GM12878 (cell line): ENCODE measurements at regions of chr6 and their contacts with region 1.

Region 1: DNA sequence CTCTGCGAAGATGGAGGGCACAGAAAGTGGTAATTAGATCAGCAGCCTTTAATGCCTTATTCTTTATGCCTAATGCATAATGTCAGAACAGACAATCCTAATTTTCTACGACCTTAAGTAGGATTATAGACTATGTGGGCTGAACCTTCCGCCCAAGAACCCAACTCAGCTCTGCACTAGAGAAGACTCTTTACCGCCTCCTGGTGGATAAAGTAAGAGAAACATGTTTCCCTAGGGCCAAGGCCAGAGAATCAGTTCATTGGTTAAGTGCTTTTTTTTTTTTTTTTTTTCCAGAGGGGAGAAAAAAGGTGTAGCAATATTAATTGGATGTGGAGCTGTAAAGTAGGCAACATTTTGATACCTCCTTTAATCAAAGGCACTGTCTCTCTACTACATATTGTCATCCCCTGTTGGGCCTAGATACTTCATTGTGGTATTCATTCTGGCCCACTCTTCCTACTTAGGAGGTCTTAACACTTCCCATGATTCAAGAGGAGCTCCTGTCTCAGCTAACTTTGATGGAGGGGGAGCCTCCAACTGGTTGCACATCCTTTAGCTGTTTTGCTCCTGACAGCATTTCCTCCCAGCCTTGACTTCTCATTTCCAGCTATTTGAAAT is 124.9 kb upstream of the NRN1 start:
- DNase-seq: no peak
- ATAC-seq: peak; percentile 67
- H3K4me3 ChIP-seq: no peak overlapping the region
- H3K27ac ChIP-seq: no peak overlapping the region
- H3K4me1 ChIP-seq: no peaks in the 10 kb centered on the region
- H3K27me3 ChIP-seq: no peaks in the 10 kb centered on the region
- CTCF ChIP-seq: peak; percentile 32 to 63 (median 45); a peak in 5 of 6 replicates
- EP300 ChIP-seq: no peak
- POLR2A ChIP-seq: no peak
- RAD21 ChIP-seq: peak; percentile 62

Region 2: GRCh38 chr6:6057424-6058053 is 74.1 kb before region 1 on chr6:
- CTCF ChIA-PET with region 1: interaction called, 27 read pairs
- POLR2A ChIA-PET with region 1: no interaction called
- RAD21 ChIA-PET with region 1: interaction called, 3 read pairs
- SMC1A ChIA-PET with region 1: interaction called, 9 read pairs
- in situ Hi-C with region 1: no loop called
- intact Hi-C with region 1: loop called (anchors 5 kb)
- DNase-seq: peak; percentile 53
- ATAC-seq: peak; percentile 97
- H3K4me3 ChIP-seq: no peak overlapping the region
- H3K27ac ChIP-seq: no peak overlapping the region
- H3K4me1 ChIP-seq: no peaks in the 10 kb centered on the region
- H3K27me3 ChIP-seq: no peaks in the 10 kb centered on the region; a peak in 2 of 4 replicates
- CTCF ChIP-seq: peak; percentile 54 to 68 (median 66); a peak in 5 of 6 replicates
- EP300 ChIP-seq: no peak
- POLR2A ChIP-seq: no peak
- RAD21 ChIP-seq: peak; percentile 74

Region 3: GRCh38 chr6:6148192-6148815 is 16.7 kb after region 1 on chr6:
- CTCF ChIA-PET with region 1: interaction called, 11 read pairs
- POLR2A ChIA-PET with region 1: no interaction called
- RAD21 ChIA-PET with region 1: no interaction called
- SMC1A ChIA-PET with region 1: interaction called, 5 read pairs
- in situ Hi-C with region 1: no loop called
- intact Hi-C with region 1: no loop called
- DNase-seq: no peak
- ATAC-seq: no peak
- H3K4me3 ChIP-seq: no peak overlapping the region
- H3K27ac ChIP-seq: no peak overlapping the region
- H3K4me1 ChIP-seq: no peaks in the 10 kb centered on the region
- H3K27me3 ChIP-seq: no peaks in the 10 kb centered on the region
- CTCF ChIP-seq: no peak
- EP300 ChIP-seq: no peak
- POLR2A ChIP-seq: no peak
- RAD21 ChIP-seq: no peak

Region 4: GRCh38 chr6:6243846-6244245 is 112.2 kb after region 1 on chr6:
- CTCF ChIA-PET with region 1: no interaction called
- POLR2A ChIA-PET with region 1: no interaction called
- RAD21 ChIA-PET with region 1: no interaction called
- SMC1A ChIA-PET with region 1: no interaction called
- in situ Hi-C with region 1: no loop called
- intact Hi-C with region 1: no loop called
- DNase-seq: no peak
- ATAC-seq: no peak
- H3K4me3 ChIP-seq: no peak overlapping the region
- H3K27ac ChIP-seq: no peak overlapping the region
- H3K4me1 ChIP-seq: no peaks in the 10 kb centered on the region
- H3K27me3 ChIP-seq: no peaks in the 10 kb centered on the region
- CTCF ChIP-seq: no peak
- EP300 ChIP-seq: no peak
- POLR2A ChIP-seq: no peak
- RAD21 ChIP-seq: no peak